Spleen (tissue), 13 donors: ENCODE measurements at regions of chr5 and their contacts with region 1.

Region 1: GRCh38 chr5:73201547-73202513 is 28.8 kb downstream of the TMEM174 start:
- DNase-seq: peak; percentile 92
- H3K4me3 ChIP-seq: peak overlapping the region in 1 of 8 donors; percentile 47
- H3K27ac ChIP-seq: no peak overlapping the region
- H3K4me1 ChIP-seq: peaks cover 0 to 10% (median 6%) of the 10 kb centered on the region in 6 donors
- H3K27me3 ChIP-seq: peaks cover 0 to 61% (median 12%) of the 10 kb centered on the region in 7 donors
- CTCF ChIP-seq: peak; percentile 49 to 88 (median 84)
- POLR2A ChIP-seq: no peak

Region 2: GRCh38 chr5:73088026-73088425 is 113.8 kb before region 1 on chr5:
- intact Hi-C with region 1: loop called (anchors 10 kb)
- DNase-seq: no peak
- H3K4me3 ChIP-seq: no peak overlapping the region
- H3K27ac ChIP-seq: no peak overlapping the region
- H3K4me1 ChIP-seq: no peaks in the 10 kb centered on the region
- H3K27me3 ChIP-seq: no peaks in the 10 kb centered on the region
- CTCF ChIP-seq: no peak
- POLR2A ChIP-seq: no peak

Region 3: DNA sequence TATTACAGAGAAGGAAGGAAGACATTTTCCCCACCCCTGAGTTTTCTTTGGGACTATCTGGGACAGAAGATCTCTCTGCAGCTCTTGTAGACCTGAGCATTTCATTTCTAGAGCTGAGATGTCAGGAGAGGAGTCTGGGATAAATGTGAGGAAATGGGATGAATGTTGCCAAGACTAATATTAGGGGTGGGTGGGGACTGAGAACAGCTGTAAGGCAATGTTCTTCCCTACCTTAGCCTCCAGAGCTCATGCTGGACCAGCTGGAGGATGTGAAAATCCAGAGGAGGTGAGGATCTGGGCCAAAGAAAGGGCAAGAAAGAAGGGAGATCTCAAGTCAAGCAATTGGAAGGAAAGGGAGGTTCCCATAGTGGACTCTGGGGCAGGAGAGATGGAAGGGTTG is 269.8 kb after region 1 on chr5:
- intact Hi-C with region 1: no loop called
- DNase-seq: no peak
- H3K4me3 ChIP-seq: no peak overlapping the region
- H3K27ac ChIP-seq: no peak overlapping the region
- H3K4me1 ChIP-seq: no peaks in the 10 kb centered on the region
- H3K27me3 ChIP-seq: peaks cover 0 to 17% (median 0%) of the 10 kb centered on the region in 7 donors
- CTCF ChIP-seq: no peak
- POLR2A ChIP-seq: no peak

Region 4: GRCh38 chr5:73596705-73597328 is 395.0 kb after region 1 on chr5:
- intact Hi-C with region 1: no loop called
- DNase-seq: no peak
- H3K4me3 ChIP-seq: no peak overlapping the region
- H3K27ac ChIP-seq: no peak overlapping the region
- H3K4me1 ChIP-seq: no peaks in the 10 kb centered on the region
- H3K27me3 ChIP-seq: no peaks in the 10 kb centered on the region
- CTCF ChIP-seq: peak in 7 of 11 experiments; percentile 11 to 55 (median 50)
- POLR2A ChIP-seq: no peak